AG04449 (cell line): ENCODE measurements at regions of chr1 and their contacts with region 1.

Region 1: GRCh38 chr1:50968158-50968820 is 1.8 kb upstream of the CDKN2C start:
- DNase-seq: no peak
- H3K4me3 ChIP-seq: peak overlapping the region; percentile 83
- CTCF ChIP-seq: peak; percentile 56

Region 2: DNA sequence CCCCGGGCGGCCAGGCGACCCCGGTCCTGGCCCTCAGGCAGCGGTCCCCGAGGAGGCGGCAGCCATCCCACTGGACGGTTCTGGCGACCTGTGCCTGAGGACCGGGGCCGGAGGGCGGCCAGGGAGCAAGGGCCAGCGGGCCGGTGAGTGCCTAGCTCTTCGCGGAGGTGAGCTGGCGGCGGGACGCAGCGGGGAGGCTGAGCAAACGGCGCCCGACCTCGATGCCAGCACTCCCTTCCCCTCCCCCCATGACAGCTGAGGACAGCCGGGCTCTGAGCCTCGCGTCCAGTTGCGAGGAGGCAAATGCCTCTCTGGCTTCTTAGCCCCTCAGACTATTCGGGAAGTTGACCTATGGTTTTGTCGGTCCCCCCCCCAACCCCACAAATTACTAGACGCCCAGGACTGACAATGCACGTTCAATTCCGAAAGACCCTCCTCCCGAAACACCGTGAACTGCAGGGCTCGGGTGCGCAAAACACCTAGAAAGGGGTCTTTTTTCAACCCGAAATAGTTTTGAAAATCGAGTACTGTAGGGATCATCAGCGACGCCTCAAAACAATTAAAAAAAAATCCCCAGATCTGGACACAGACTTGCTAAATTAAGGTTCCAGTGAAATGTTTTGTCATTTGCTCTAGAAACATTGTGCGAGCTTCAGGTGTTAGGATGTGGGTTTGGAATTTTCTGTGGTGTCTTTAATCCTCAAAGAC is 10.0 kb after region 1 on chr1:
- CTCF ChIA-PET with region 1: interaction called, 10 read pairs
- POLR2A ChIA-PET with region 1: interaction called, 26 read pairs
- DNase-seq: no peak
- H3K4me3 ChIP-seq: peak overlapping the region; percentile 75
- CTCF ChIP-seq: no peak